ENCODE measurements at regions of chr12 and their contacts with region 1.

Region 1: GRCh38 chr12:94987801-94988200 is 15.7 kb downstream of the NDUFA12 start:
- DNase-seq: peak in 3 of 10 donors; percentile 48 to 63 (median 60)
- ATAC-seq: peak; percentile 67 to 75
- H3K4me3 Mint-ChIP-seq: peak overlapping the region; percentile 2 to 73 (median 52)
- H3K27ac Mint-ChIP-seq: peak overlapping the region; percentile 70 to 95 (median 92)
- H3K4me1 Mint-ChIP-seq: peaks cover 35 to 70% (median 57%) of the 10 kb centered on the region in 4 donors
- H3K27me3 Mint-ChIP-seq: no peaks in the 10 kb centered on the region

Region 2: GRCh38 chr12:95003213-95003920 is 15.6 kb after region 1 on chr12 and contains the start of gene NDUFA12:
- POLR2A ChIA-PET with region 1: interaction called, 27 read pairs
- DNase-seq: peak; percentile 87 to 97 (median 92)
- ATAC-seq: peak; percentile 99
- H3K4me3 Mint-ChIP-seq: peak within 1 kb of the TSS; percentile 93 to 95 (median 94)
- H3K27ac Mint-ChIP-seq: peak within 1 kb of the TSS; percentile 90 to 97 (median 94)
- H3K4me1 Mint-ChIP-seq: peaks cover 26 to 66% (median 59%) of the 10 kb centered on the region in 4 donors
- H3K27me3 Mint-ChIP-seq: no peaks in the 10 kb centered on the region
- polyA plus RNA-seq, gene NDUFA12: 282 to 364 (median 294) TPM

Measured in naive thymus-derived CD8-positive, alpha-beta T cell (primary cell).